Dendritic cell treated with granulocyte-macrophage colony-stimulating factor and Interleukin-4, amounts not matched to agents 40 ng/mL and 50 ng/mL, for 4 days (primary cell): ENCODE measurements at regions of chr3 and their contacts with region 1.

Region 1: GRCh38 chr3:54830658-54831057 is 97.2 kb downstream of the LRTM1 start:
- H3K4me3 Mint-ChIP-seq: no peak overlapping the region
- H3K27ac Mint-ChIP-seq: no peak overlapping the region
- H3K4me1 Mint-ChIP-seq: no peaks in the 10 kb centered on the region
- H3K27me3 Mint-ChIP-seq: peaks cover 2% of the 10 kb centered on the region

Region 2: DNA sequence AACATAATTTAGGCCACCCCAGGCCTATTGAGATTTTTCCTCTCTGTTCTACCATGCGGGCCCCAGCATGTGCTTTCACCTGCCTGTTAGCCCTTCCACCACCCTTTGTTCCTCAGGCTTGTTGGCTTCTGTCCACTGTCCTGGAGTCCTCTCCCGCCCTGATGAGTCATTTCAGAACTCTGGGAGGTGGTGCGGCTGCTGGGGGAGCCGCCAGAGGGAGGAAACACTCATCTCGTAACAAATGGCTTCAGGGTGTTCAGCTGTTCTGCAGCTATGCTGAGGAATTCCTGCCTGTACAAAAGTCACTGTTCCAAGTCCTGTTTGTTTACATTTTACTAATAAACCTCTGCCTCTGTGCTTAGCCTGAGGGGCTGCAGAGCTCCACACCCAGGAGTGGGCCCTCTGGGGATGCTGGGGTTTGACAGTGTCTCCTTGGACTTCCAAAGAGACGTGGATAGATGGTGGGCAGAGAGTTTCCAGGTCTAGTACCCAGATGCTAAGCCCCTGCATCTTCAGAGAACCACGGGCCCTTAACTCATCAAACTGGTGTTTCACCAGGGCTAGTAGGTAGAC is 61.0 kb after region 1 on chr3:
- intact Hi-C with region 1: no loop called
- H3K4me3 Mint-ChIP-seq: no peak overlapping the region
- H3K27ac Mint-ChIP-seq: no peak overlapping the region
- H3K4me1 Mint-ChIP-seq: no peaks in the 10 kb centered on the region
- H3K27me3 Mint-ChIP-seq: no peaks in the 10 kb centered on the region

Region 3: GRCh38 chr3:56443372-56443771 is 1612.7 kb after region 1 on chr3:
- intact Hi-C with region 1: loop called (anchors 10 kb)
- H3K4me3 Mint-ChIP-seq: no peak overlapping the region
- H3K27ac Mint-ChIP-seq: no peak overlapping the region
- H3K4me1 Mint-ChIP-seq: no peaks in the 10 kb centered on the region
- H3K27me3 Mint-ChIP-seq: no peaks in the 10 kb centered on the region